Right ventricle myocardium inferior (tissue), 1 donor: ENCODE measurements at regions of chr2 and their contacts with region 1.

Region 1: GRCh38 chr2:99403524-99403923 is 66.3 kb downstream of the EIF5B start:
- DNase-seq: no peak
- ATAC-seq: peak; percentile 50

Region 2: GRCh38 chr2:99420751-99421299 is 17.3 kb after region 1 on chr2:
- intact Hi-C with region 1: loop called (anchors 2 kb)
- DNase-seq: no peak
- ATAC-seq: peak; percentile 77

Region 3: GRCh38 chr2:99597616-99598015 is 194.1 kb after region 1 on chr2:
- intact Hi-C with region 1: no loop called
- DNase-seq: no peak
- ATAC-seq: no peak